ENCODE measurements at regions of chr10 and their contacts with region 1.

Region 1: DNA sequence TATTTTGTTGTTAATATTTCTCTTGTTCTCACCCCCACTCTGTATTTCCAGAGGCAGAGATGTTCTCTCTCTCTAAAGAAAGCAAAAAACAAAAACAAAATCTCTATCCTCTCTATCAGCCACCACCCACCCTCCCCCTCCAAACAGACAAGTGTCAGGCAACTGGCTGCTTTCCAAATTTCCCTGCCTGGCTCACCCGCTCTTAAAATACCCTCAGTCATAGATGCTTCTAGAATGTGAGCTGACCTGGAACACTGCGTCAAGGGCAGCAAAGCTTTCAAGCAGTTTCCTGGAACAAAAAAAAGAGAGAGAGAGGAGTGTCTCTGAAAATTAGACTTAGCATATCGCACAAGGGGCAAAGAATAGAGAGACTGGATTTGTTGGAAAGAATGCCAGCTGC is 341.0 kb upstream of the ZMIZ1 start:
- DNase-seq: no peak
- ATAC-seq: no peak
- H3K4me3 ChIP-seq: no peak overlapping the region
- H3K27ac ChIP-seq: no peak overlapping the region
- H3K4me1 ChIP-seq: no peaks in the 10 kb centered on the region
- H3K27me3 ChIP-seq: peaks cover 91% of the 10 kb centered on the region
- CTCF ChIP-seq: no peak

Region 2: GRCh38 chr10:78714225-78714624 is 13.5 kb before region 1 on chr10:
- CTCF ChIA-PET with region 1: no interaction called
- POLR2A ChIA-PET with region 1: interaction called, 33 read pairs
- intact Hi-C with region 1: no loop called
- DNase-seq: no peak
- ATAC-seq: no peak
- H3K4me3 ChIP-seq: no peak overlapping the region
- H3K27ac ChIP-seq: no peak overlapping the region
- H3K4me1 ChIP-seq: peaks cover 6% of the 10 kb centered on the region; the same call in 1 of the 2 replicates
- H3K27me3 ChIP-seq: peaks cover 18% of the 10 kb centered on the region; the same call in 1 of the 2 replicates
- CTCF ChIP-seq: no peak